Naive thymus-derived CD4-positive, alpha-beta T cell (primary cell): ENCODE measurements at regions of chr15 and their contacts with region 1.

Region 1: DNA sequence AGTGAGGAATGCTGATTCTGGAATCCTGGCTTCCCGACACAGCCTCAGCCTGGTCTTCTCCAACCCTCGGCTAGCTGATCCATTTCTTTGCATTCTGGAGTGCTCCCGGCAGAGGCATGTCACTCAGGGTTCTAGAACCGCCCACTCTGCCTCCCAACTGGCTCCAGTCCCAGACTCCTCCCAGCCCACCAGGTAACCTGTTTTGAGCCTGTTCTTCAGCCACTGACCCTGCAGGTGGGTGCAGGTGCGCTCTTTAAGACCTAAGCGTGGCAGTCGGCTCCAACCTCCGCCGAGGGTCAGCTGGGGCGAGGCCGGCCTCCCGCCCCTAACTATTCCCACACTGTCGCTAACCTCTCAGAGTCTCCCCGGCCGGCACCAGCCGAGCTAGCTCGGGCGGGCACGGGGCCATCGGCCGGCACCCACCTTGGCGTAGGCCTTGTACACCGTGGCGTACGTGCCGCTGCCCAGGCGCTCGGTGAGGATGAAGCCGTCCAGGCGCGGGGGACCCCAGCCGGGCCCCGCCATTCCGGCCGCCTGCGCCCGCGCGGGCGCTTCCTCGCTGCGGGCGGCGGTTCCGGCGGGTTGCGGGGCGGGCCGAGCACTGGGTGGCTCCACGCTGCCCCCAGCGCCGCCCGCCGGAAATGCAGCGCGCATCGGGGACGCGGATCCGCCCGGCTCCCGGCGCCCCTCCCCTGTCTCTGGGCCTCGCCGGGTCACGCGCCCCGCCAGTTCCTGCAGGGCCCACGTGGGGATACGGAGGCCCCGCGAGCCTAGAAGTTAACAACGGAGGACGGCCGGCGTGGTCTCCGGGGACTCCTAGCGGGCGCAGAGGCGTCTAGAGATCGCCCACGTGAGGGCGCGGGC is at the start of gene ULK3:
- DNase-seq: peak; percentile 89 to 97 (median 93)
- ATAC-seq: peak; percentile 97
- H3K4me3 ChIP-seq: peak within 1 kb of the TSS; percentile 74
- H3K4me3 Mint-ChIP-seq: peak within 1 kb of the TSS; percentile 80 to 95 (median 90)
- H3K27ac ChIP-seq: peak within 1 kb of the TSS; percentile 79
- H3K27ac Mint-ChIP-seq: peak within 1 kb of the TSS; percentile 88 to 95 (median 94)
- H3K4me1 ChIP-seq: peaks cover 40 to 50% of the 10 kb centered on the region in 2 donors
- H3K4me1 Mint-ChIP-seq: peaks cover 26 to 62% (median 50%) of the 10 kb centered on the region in 7 donors
- H3K27me3 ChIP-seq: no peaks in the 10 kb centered on the region
- H3K27me3 Mint-ChIP-seq: no peaks in the 10 kb centered on the region
- total RNA-seq, gene ULK3: 53.2 to 106 (median 59.2) TPM

Region 2: GRCh38 chr15:74519311-74519710 is 323.5 kb before region 1 on chr15:
- CTCF ChIA-PET with region 1: no interaction called
- POLR2A ChIA-PET with region 1: no interaction called
- intact Hi-C with region 1: no loop called
- DNase-seq: no peak
- ATAC-seq: no peak
- H3K4me3 ChIP-seq: no peak overlapping the region
- H3K4me3 Mint-ChIP-seq: no peak overlapping the region
- H3K27ac ChIP-seq: no peak overlapping the region
- H3K27ac Mint-ChIP-seq: no peak overlapping the region
- H3K4me1 ChIP-seq: no peaks in the 10 kb centered on the region
- H3K4me1 Mint-ChIP-seq: peaks cover 0 to 3% (median 0%) of the 10 kb centered on the region in 7 donors
- H3K27me3 ChIP-seq: no peaks in the 10 kb centered on the region
- H3K27me3 Mint-ChIP-seq: no peaks in the 10 kb centered on the region

Region 3: GRCh38 chr15:74787251-74788041 is 55.4 kb before region 1 on chr15:
- CTCF ChIA-PET with region 1: interaction called, 8 read pairs
- POLR2A ChIA-PET with region 1: interaction called, 13 read pairs
- intact Hi-C with region 1: loop called in 1 of 2 experiments (anchors 1 kb)
- DNase-seq: peak; percentile 69 to 97 (median 96)
- ATAC-seq: peak; percentile 85
- H3K4me3 ChIP-seq: peak overlapping the region; percentile 85
- H3K4me3 Mint-ChIP-seq: peak overlapping the region; percentile 87 to 97 (median 93)
- H3K27ac ChIP-seq: peak overlapping the region; percentile 92
- H3K27ac Mint-ChIP-seq: peak overlapping the region; percentile 95 to 99 (median 98)
- H3K4me1 ChIP-seq: peaks cover 66 to 72% of the 10 kb centered on the region in 2 donors
- H3K4me1 Mint-ChIP-seq: peaks cover 57 to 78% (median 75%) of the 10 kb centered on the region in 7 donors
- H3K27me3 ChIP-seq: no peaks in the 10 kb centered on the region
- H3K27me3 Mint-ChIP-seq: no peaks in the 10 kb centered on the region

Region 4: GRCh38 chr15:74873036-74873755 is 30.4 kb after region 1 on chr15 and contains the start of gene SCAMP2:
- CTCF ChIA-PET with region 1: interaction called, 11 read pairs
- POLR2A ChIA-PET with region 1: interaction called, 42 read pairs
- intact Hi-C with region 1: loop called (anchors 1 kb)
- DNase-seq: peak; percentile 83 to 94 (median 91)
- ATAC-seq: peak; percentile 95
- H3K4me3 ChIP-seq: peak within 1 kb of the TSS; percentile 86
- H3K4me3 Mint-ChIP-seq: peak within 1 kb of the TSS; percentile 92 to 100 (median 98)
- H3K27ac ChIP-seq: peak within 1 kb of the TSS; percentile 98
- H3K27ac Mint-ChIP-seq: peak within 1 kb of the TSS; percentile 88 to 99 (median 96)
- H3K4me1 ChIP-seq: peaks cover 38 to 39% of the 10 kb centered on the region in 2 donors
- H3K4me1 Mint-ChIP-seq: peaks cover 31 to 54% (median 45%) of the 10 kb centered on the region in 7 donors
- H3K27me3 ChIP-seq: no peaks in the 10 kb centered on the region
- H3K27me3 Mint-ChIP-seq: peaks cover 0 to 8% (median 0%) of the 10 kb centered on the region in 5 donors
- total RNA-seq, gene SCAMP2: 78.9 to 130 (median 116) TPM

Region 5: DNA sequence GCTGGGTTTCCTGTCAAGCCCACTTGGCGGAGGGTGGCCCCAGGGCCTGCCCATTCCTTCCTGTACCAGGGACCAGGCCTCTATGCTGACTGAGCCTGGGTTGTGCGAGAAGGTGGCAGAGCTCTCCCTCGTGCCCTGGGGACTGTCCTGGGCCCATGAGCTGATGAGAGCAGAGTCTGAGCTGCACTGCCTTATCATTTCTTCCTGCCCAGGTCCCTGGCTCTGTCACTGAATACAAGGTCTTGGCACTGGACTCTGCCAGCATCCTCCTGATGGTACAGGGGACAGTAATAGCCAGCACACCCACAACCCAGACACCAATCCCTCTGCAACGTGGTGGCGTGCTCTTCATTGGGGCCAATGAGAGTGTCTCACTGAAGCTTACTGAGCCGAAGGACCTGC is 54.5 kb after region 1 on chr15:
- CTCF ChIA-PET with region 1: interaction called, 20 read pairs
- POLR2A ChIA-PET with region 1: interaction called, 44 read pairs
- intact Hi-C with region 1: loop called in 1 of 2 experiments (anchors 1 kb)
- DNase-seq: no peak
- ATAC-seq: no peak
- H3K4me3 ChIP-seq: no peak overlapping the region
- H3K4me3 Mint-ChIP-seq: no peak overlapping the region
- H3K27ac ChIP-seq: no peak overlapping the region
- H3K27ac Mint-ChIP-seq: peak overlapping the region in 4 of 9 donors; percentile 7 to 45 (median 22)
- H3K4me1 ChIP-seq: peaks cover 30 to 35% of the 10 kb centered on the region in 2 donors
- H3K4me1 Mint-ChIP-seq: peaks cover 25 to 47% (median 38%) of the 10 kb centered on the region in 7 donors
- H3K27me3 ChIP-seq: no peaks in the 10 kb centered on the region
- H3K27me3 Mint-ChIP-seq: no peaks in the 10 kb centered on the region

Region 6: DNA sequence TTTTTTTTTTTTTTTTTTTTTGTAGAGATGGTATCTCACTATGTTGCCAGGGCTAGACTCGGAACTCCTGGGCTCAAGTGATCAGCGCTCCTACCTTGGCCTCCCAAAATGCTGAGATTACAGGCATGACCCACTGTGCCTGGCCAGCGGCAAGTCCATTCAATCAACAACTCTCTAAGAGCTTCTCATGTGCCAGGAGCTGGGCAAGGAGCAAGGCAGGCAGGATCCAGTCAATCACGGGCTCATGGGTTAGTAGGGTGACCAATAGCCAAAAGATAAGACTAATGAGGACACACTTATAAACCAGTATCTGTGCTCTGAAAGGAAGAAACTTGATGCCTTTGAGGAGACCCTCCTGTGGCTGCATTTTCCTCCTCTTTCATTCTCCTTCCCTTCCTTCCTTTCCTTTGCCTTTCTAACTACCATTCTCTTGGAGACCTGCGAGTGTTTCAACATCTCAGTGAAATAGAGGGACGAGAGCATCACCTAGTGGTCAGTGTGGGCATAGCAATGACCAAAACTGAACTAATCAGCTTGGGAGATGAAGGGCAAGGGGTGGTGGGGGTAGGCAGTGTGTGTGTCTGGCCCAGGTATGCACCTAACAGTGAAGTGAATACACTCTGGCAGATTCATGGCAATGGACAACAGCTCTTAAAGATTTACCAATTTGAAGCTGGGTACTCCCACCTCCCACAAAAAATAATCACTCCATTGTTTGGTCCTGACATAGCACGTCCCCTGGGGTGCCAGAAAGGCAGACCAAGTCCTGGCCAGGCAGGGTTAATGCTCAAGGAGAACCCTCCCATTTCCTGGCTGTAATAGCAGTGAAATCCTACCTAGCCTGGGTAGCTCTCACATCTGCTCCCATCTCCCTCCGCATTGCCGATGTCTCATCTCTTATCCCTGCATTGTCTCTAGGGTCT is 107.5 kb after region 1 on chr15:
- CTCF ChIA-PET with region 1: no interaction called
- POLR2A ChIA-PET with region 1: no interaction called
- intact Hi-C with region 1: loop called (anchors 1 to 5 kb)
- DNase-seq: peak; percentile 54 to 82 (median 75)
- ATAC-seq: peak; percentile 97
- H3K4me3 ChIP-seq: no peak overlapping the region
- H3K4me3 Mint-ChIP-seq: no peak overlapping the region
- H3K27ac ChIP-seq: no peak overlapping the region
- H3K27ac Mint-ChIP-seq: peak overlapping the region in 2 of 9 donors; percentile 28 to 54
- H3K4me1 ChIP-seq: no peaks in the 10 kb centered on the region
- H3K4me1 Mint-ChIP-seq: peaks cover 4 to 17% (median 10%) of the 10 kb centered on the region in 7 donors
- H3K27me3 ChIP-seq: no peaks in the 10 kb centered on the region
- H3K27me3 Mint-ChIP-seq: peaks cover 0 to 3% (median 0%) of the 10 kb centered on the region in 5 donors